ENCODE measurements at regions of chr15 and their contacts with region 1.

Region 1: DNA sequence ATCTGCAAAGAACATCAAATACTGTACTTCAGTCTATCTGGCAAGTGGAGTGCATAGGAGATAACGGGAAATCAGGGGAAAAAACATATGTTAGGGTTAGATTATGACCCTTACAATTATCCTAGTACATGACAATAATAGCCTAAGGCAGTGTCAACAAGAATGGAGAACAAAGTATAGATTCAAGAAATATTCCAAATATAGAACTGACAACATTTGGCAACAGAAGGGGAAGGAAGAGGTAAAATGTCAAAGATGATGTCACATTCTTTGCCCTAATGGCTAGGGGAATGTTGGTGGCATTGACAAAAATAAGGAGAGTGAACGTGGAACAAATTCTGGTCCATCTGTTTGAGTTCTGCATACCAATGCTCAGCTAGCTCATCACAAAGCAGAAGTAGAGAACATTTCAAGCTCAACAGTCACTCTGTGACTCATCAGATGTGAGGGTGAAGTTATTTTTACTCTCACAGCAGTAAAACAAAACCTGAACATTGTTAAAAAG is 15.5 kb upstream of the ATP8B4 start:
- DNase-seq: no peak
- H3K4me3 Mint-ChIP-seq: peak overlapping the region; percentile 20
- H3K27ac Mint-ChIP-seq: peak overlapping the region; percentile 89
- H3K4me1 Mint-ChIP-seq: peaks cover 56% of the 10 kb centered on the region
- H3K27me3 Mint-ChIP-seq: no peaks in the 10 kb centered on the region

Region 2: GRCh38 chr15:48925714-48926223 is 1208.8 kb before region 1 on chr15:
- intact Hi-C with region 1: loop called (anchors 1 kb)
- DNase-seq: no peak
- H3K4me3 Mint-ChIP-seq: peak overlapping the region; percentile 31
- H3K27ac Mint-ChIP-seq: peak overlapping the region; percentile 96
- H3K4me1 Mint-ChIP-seq: peaks cover 74% of the 10 kb centered on the region
- H3K27me3 Mint-ChIP-seq: no peaks in the 10 kb centered on the region

Region 3: GRCh38 chr15:50009634-50010033 is 124.9 kb before region 1 on chr15:
- intact Hi-C with region 1: loop called (anchors 5 kb)
- DNase-seq: no peak
- H3K4me3 Mint-ChIP-seq: no peak overlapping the region
- H3K27ac Mint-ChIP-seq: peak overlapping the region; percentile 40
- H3K4me1 Mint-ChIP-seq: peaks cover 10% of the 10 kb centered on the region
- H3K27me3 Mint-ChIP-seq: no peaks in the 10 kb centered on the region

Region 4: GRCh38 chr15:50107591-50108408 is 26.8 kb before region 1 on chr15:
- intact Hi-C with region 1: loop called (anchors 1 kb)
- DNase-seq: peak; percentile 44
- H3K4me3 Mint-ChIP-seq: peak overlapping the region; percentile 75
- H3K27ac Mint-ChIP-seq: peak overlapping the region; percentile 93
- H3K4me1 Mint-ChIP-seq: peaks cover 93% of the 10 kb centered on the region
- H3K27me3 Mint-ChIP-seq: no peaks in the 10 kb centered on the region

Region 5: GRCh38 chr15:50182219-50183013 is 47.8 kb after region 1 on chr15:
- intact Hi-C with region 1: loop called (anchors 1 kb)
- DNase-seq: peak; percentile 53
- H3K4me3 Mint-ChIP-seq: peak overlapping the region; percentile 96
- H3K27ac Mint-ChIP-seq: peak overlapping the region; percentile 88
- H3K4me1 Mint-ChIP-seq: peaks cover 60% of the 10 kb centered on the region
- H3K27me3 Mint-ChIP-seq: no peaks in the 10 kb centered on the region

Region 6: DNA sequence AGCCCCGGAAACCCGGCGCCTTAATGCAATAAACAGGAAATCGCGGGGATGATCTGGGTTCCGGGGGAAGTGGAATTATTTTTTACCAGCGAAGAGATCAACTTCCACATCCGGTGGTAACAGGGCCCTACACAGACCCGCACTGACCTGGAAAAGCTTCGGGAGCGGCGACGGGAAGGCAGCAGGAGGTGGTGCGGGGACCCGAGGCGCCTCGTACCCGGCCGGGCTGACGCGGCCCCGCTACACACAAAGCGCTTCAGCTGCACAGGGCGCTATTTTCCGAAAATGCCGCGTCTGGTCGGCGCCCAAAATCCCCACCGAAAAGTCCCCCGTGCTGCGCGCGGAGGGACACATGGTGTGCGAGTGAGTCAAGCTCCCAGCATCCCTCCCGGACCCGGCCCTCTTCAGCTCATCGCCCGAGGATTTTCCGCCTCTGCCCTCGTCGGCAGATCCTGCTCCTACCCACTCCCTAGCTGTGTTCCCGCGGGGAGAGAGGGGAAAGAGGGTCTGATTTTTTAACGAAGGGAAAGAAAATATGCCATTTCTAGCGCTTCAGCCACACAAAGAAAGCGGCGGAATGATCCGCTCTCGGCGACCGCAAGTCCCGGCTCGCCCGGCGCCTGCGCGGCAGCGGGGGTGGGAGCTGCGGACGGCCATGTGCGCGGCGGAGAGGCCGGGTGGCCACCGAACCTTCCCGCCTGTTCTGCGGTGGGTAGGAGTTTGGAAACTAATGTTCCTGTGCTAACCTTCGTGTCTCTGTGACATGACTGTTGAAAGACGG is 220.5 kb after region 1 on chr15 and contains the start of gene GABPB1:
- intact Hi-C with region 1: loop called (anchors 1 kb)
- DNase-seq: peak; percentile 87
- H3K4me3 Mint-ChIP-seq: peak within 1 kb of the TSS; percentile 100
- H3K27ac Mint-ChIP-seq: peak within 1 kb of the TSS; percentile 100
- H3K4me1 Mint-ChIP-seq: peaks cover 48% of the 10 kb centered on the region
- H3K27me3 Mint-ChIP-seq: no peaks in the 10 kb centered on the region
- total RNA-seq, gene GABPB1: 80.7 and 81.0 TPM in 2 replicates